Posterior vena cava (tissue), 2 donors: ENCODE measurements at regions of chr3 and their contacts with region 1.

Region 1: GRCh38 chr3:171846597-171846996 is 3.4 kb downstream of the TMEM212 start:
- DNase-seq: no peak

Region 2: GRCh38 chr3:170228093-170228766 is 1618.4 kb before region 1 on chr3:
- intact Hi-C with region 1: loop called in 1 of 2 experiments (anchors 5 kb)
- DNase-seq: no peak

Region 3: GRCh38 chr3:170989100-170989648 is 857.4 kb before region 1 on chr3:
- intact Hi-C with region 1: loop called in 1 of 2 experiments (anchors 5 kb)
- DNase-seq: no peak

Region 4: GRCh38 chr3:171600030-171600429 is 246.6 kb before region 1 on chr3:
- intact Hi-C with region 1: no loop called
- DNase-seq: no peak